ENCODE measurements at regions of chr1 and their contacts with region 1.

Region 1: DNA sequence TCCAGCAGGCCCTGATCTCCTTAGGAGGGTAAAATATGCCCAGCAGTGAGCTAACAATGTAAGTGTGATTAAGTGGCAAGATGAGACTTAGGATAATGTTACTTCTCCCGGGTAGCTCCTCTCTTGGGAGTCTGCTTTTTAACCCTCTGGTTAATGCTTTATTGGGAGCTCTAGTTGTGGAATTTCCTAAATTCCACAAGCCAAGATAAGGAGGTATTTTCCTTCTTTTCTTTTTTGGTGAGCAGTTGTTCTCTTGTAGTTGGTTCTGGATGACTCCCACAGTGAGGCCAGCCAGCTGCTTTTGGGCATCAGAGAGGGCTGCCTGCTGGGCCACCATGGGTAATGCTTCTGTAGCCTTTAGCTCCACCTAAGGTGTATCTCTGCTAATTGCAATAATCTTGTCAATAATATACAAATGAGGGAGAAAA is 19.3 kb downstream of the C1orf52 start:
- DNase-seq: peak; percentile 51
- H3K4me3 Mint-ChIP-seq: no peak overlapping the region
- H3K27ac Mint-ChIP-seq: no peak overlapping the region
- H3K4me1 Mint-ChIP-seq: peaks cover 14% of the 10 kb centered on the region
- H3K27me3 Mint-ChIP-seq: peaks cover 8% of the 10 kb centered on the region

Region 2: DNA sequence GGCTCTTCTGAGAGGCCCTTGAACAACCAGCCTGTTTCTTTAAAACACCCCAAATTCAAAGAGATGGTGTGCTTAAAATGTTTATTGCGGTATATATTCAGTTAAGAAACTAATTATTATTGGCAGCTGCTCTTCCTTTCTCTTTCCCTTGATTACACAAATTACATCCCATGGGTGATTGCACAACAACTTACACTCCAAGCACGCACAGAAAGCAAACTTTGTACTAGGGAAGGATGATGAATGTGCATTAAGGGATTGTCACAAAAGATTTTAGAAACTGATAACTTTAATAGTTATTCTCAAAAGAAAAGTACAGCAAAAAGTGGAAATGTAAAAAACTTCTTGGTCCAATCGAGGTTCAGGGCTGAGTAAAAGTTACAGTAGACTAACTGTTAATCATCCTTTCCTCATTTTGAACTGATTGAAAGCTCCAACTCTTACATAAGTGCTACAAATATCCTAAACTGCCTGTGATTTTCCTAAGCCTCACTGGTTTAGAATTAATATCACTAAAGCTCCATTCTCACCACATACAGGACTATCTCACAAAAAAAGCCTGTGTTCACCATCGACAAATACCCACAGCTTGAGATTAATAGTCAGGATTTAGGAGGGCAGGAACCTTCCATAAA is 1394.6 kb before region 1 on chr1:
- CTCF ChIA-PET with region 1: no interaction called
- intact Hi-C with region 1: no loop called
- DNase-seq: no peak
- H3K4me3 Mint-ChIP-seq: no peak overlapping the region
- H3K27ac Mint-ChIP-seq: no peak overlapping the region
- H3K4me1 Mint-ChIP-seq: peaks cover 15% of the 10 kb centered on the region
- H3K27me3 Mint-ChIP-seq: no peaks in the 10 kb centered on the region

Region 3: DNA sequence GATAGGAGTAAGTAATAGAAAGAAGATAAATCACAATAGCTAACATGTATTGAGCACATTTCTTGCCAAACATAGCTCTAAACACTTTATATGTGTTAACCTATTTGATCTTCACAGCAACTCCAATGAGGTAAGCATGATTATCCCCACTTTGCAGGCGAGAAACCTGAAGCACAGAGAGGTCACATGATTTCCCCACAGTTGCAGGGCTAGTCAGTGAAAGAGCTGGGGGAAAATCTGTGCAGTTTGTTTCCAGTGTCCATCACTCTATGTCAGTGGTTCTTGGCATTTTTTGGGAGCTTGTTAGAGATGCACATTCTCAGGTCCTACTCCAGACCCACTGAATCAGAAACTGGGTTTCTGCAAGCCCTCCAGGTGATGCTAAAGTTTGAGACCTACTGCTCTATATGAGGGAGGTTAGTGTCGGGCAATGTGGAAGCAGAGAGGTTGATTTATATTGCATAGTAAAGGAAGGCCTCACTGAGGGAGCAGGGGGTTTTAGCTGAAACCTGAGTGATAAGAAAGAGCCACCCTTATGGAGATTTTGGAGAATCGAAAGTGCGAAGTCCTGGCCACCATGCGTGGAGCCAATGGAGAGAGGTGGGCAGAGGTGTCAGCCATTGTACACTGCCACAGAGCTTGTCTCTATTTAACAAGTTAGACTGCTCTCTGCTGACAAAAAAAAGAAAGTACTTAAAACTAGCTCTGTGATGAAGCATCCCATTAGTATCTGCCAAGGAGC is 212.8 kb before region 1 on chr1:
- CTCF ChIA-PET with region 1: no interaction called
- intact Hi-C with region 1: loop called (anchors 1 kb)
- DNase-seq: peak; percentile 25
- H3K4me3 Mint-ChIP-seq: no peak overlapping the region
- H3K27ac Mint-ChIP-seq: peak overlapping the region; percentile 34
- H3K4me1 Mint-ChIP-seq: peaks cover 7% of the 10 kb centered on the region
- H3K27me3 Mint-ChIP-seq: no peaks in the 10 kb centered on the region

Region 4: GRCh38 chr1:85109475-85109874 is 130.7 kb before region 1 on chr1:
- CTCF ChIA-PET with region 1: interaction called, 7 read pairs
- intact Hi-C with region 1: loop called (anchors 1 kb)
- DNase-seq: peak; percentile 48
- H3K4me3 Mint-ChIP-seq: no peak overlapping the region
- H3K27ac Mint-ChIP-seq: no peak overlapping the region
- H3K4me1 Mint-ChIP-seq: no peaks in the 10 kb centered on the region
- H3K27me3 Mint-ChIP-seq: no peaks in the 10 kb centered on the region

Measured in activated naive CD4-positive, alpha-beta T cell treated with anti-CD3 and anti-CD28 coated beads for 36 hours (primary cell).